Activated B cell treated with CpG ODN at 0.5 μM for 24 hours (primary cell): ENCODE measurements at regions of chr7 and their contacts with region 1.

Region 1: DNA sequence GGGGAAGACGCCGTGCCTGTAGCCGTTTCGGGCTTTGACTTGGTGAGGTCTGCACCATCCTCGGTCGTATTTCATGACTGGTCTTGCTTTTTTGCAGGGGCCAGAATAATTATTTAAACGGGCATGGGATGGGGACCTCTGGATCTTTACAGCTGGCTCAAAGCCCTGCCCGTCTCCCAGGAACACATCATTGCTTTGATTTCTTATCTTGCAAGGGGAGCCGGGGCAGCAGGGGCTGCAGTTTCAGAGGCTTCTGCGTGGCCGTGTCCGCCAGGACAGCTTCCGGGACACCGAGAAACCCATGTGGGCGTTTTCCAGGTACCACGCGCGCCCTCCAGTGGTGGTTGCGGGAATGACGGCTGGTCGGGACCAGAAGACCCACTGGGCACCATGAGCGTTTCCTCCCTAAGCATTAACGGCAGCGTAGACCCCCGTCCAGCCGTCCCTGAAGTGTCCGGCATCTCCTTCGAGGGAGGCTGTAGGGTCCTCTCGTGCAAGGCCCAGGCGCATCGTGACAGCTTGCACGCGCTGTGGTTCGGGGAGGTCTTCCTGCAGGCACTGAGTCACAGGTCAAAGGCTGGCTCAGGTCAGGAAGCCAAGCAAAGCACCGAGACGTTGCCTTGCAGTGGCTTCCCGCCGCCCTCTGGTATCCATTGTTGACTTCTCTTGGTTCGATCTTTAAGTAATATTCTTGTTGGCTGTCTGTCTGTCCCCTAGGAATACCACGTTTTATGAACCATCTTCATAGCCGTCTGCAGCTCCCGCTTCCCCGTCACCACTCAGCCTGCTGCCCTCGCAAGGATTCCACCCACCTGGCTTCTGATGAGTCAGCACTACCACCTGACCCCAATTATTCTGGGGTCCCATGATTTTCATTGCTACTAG is 16.2 kb upstream of the ZFAND2A start:
- DNase-seq: peak; percentile 85
- ATAC-seq: peak; percentile 80
- H3K4me3 Mint-ChIP-seq: peak overlapping the region; percentile 11
- H3K27ac Mint-ChIP-seq: no peak overlapping the region
- H3K4me1 Mint-ChIP-seq: peaks cover 11% of the 10 kb centered on the region
- H3K27me3 Mint-ChIP-seq: peaks cover 15% of the 10 kb centered on the region
- CTCF ChIP-seq: peak; percentile 78

Region 2: GRCh38 chr7:909358-910329 is 266.6 kb before region 1 on chr7:
- CTCF ChIA-PET with region 1: interaction called, 10 read pairs
- POLR2A ChIA-PET with region 1: interaction called, 3 read pairs
- intact Hi-C with region 1: loop called (anchors 1 kb)
- DNase-seq: peak; percentile 59
- ATAC-seq: peak; percentile 51
- H3K4me3 Mint-ChIP-seq: peak overlapping the region; percentile 74
- H3K27ac Mint-ChIP-seq: no peak overlapping the region
- H3K4me1 Mint-ChIP-seq: peaks cover 15% of the 10 kb centered on the region
- H3K27me3 Mint-ChIP-seq: peaks cover 2% of the 10 kb centered on the region
- CTCF ChIP-seq: no peak

Region 3: GRCh38 chr7:1144269-1144771 is 31.9 kb before region 1 on chr7:
- CTCF ChIA-PET with region 1: interaction called, 5 read pairs
- POLR2A ChIA-PET with region 1: interaction called, 4 read pairs
- intact Hi-C with region 1: loop called (anchors 5 kb)
- DNase-seq: no peak
- ATAC-seq: peak; percentile 43
- H3K4me3 Mint-ChIP-seq: peak overlapping the region; percentile 24
- H3K27ac Mint-ChIP-seq: peak overlapping the region; percentile 35
- H3K4me1 Mint-ChIP-seq: peaks cover 41% of the 10 kb centered on the region
- H3K27me3 Mint-ChIP-seq: no peaks in the 10 kb centered on the region
- CTCF ChIP-seq: no peak

Region 4: GRCh38 chr7:1200045-1200444 is 23.8 kb after region 1 on chr7:
- CTCF ChIA-PET with region 1: no interaction called
- POLR2A ChIA-PET with region 1: no interaction called
- intact Hi-C with region 1: no loop called
- DNase-seq: no peak
- ATAC-seq: no peak
- H3K4me3 Mint-ChIP-seq: no peak overlapping the region
- H3K27ac Mint-ChIP-seq: no peak overlapping the region
- H3K4me1 Mint-ChIP-seq: no peaks in the 10 kb centered on the region
- H3K27me3 Mint-ChIP-seq: peaks cover 5% of the 10 kb centered on the region
- CTCF ChIP-seq: no peak